ENCODE measurements at regions of chr2 and their contacts with region 1.

Region 1: GRCh38 chr2:12456293-12457151 is 260.2 kb upstream of the TRIB2 start:
- DNase-seq: peak; percentile 100
- H3K4me3 Mint-ChIP-seq: peak overlapping the region; percentile 54
- H3K27ac Mint-ChIP-seq: peak overlapping the region; percentile 80
- H3K4me1 Mint-ChIP-seq: peaks cover 19% of the 10 kb centered on the region
- H3K27me3 Mint-ChIP-seq: no peaks in the 10 kb centered on the region
- CTCF ChIP-seq: no peak

Region 2: DNA sequence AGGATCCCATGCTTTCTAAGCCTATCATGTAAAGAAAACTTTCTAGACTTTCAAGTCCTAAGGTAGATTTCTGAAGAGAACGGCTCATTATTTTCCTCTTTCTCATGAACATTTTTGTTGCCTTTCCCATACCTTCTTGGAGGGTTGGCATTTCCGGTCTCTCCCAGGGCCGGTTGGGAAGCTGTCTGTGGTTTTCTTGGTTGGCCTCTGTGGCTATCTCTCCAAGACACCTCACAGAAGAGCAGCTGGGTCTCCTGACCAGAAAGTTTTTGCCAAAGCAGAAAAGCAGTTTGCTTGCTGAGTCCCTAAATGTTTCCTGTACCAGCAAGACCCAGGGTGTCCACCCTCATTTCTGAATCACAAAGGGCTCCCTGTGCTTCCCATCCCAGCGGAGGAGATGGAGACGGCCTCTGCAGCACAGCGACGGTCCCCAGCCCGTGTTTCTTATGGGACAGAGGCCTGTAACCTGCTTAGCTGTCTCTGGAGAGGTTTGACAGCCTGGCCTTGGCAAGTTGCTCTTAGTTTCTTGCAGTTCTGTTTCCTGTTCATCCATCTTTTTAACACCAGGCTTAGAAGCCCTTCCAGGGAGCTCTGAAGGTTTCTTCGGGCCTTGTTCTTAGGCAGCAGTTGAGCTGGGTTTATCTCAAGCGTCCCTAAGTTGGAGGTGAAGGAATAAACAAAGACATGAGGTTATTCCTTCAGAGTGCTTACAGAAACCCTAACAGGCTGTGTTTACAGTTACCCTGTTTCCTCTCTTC is 882.9 kb before region 1 on chr2:
- CTCF ChIA-PET with region 1: no interaction called
- POLR2A ChIA-PET with region 1: no interaction called
- intact Hi-C with region 1: no loop called
- DNase-seq: peak; percentile 33
- H3K4me3 Mint-ChIP-seq: no peak overlapping the region
- H3K27ac Mint-ChIP-seq: no peak overlapping the region
- H3K4me1 Mint-ChIP-seq: peaks cover 7% of the 10 kb centered on the region
- H3K27me3 Mint-ChIP-seq: no peaks in the 10 kb centered on the region
- CTCF ChIP-seq: no peak

Region 3: GRCh38 chr2:11829947-11830707 is 626.4 kb before region 1 on chr2:
- CTCF ChIA-PET with region 1: interaction called, 4 read pairs
- POLR2A ChIA-PET with region 1: no interaction called
- intact Hi-C with region 1: loop called (anchors 1 kb)
- DNase-seq: peak; percentile 98
- H3K4me3 Mint-ChIP-seq: peak overlapping the region; percentile 62
- H3K27ac Mint-ChIP-seq: peak overlapping the region; percentile 46
- H3K4me1 Mint-ChIP-seq: peaks cover 11% of the 10 kb centered on the region
- H3K27me3 Mint-ChIP-seq: no peaks in the 10 kb centered on the region
- CTCF ChIP-seq: peak; percentile 58

Region 4: GRCh38 chr2:11863513-11864328 is 592.8 kb before region 1 on chr2:
- CTCF ChIA-PET with region 1: no interaction called
- POLR2A ChIA-PET with region 1: no interaction called
- intact Hi-C with region 1: loop called (anchors 1 kb)
- DNase-seq: peak; percentile 96
- H3K4me3 Mint-ChIP-seq: peak overlapping the region; percentile 9
- H3K27ac Mint-ChIP-seq: peak overlapping the region; percentile 80
- H3K4me1 Mint-ChIP-seq: peaks cover 21% of the 10 kb centered on the region
- H3K27me3 Mint-ChIP-seq: no peaks in the 10 kb centered on the region
- CTCF ChIP-seq: peak; percentile 92

Region 5: DNA sequence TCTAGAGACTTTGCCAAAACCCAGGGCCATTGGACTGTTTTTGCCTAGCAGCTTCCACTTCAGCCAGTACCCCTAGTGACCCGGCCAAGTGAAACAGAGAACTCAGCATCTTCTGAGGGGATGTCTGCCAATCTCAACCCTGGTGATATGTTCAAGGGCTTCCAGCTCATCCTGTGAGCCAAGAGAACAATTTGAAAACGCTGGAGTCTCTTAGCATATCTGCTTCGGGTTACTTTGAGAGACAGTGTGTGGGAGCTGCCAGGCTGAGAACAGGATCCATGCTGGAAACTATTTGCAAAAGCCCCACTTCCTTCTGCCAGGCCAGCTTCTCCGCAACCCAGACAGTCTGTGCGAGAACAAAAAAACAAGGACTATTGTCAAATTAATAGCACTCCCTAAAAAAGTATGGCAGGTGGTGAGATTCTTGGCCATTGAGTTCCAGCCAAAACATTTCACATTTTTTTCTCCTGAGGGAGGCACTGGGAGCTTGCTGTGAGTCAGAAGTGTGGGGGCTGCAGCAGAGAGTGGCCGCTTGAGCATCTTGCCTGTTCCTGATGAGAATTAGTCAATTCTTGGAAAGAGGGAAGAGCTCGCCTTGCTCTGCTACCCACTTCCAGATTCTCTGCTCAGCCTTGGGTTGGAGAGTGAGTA is 135.4 kb before region 1 on chr2:
- CTCF ChIA-PET with region 1: no interaction called
- POLR2A ChIA-PET with region 1: interaction called, 5 read pairs
- intact Hi-C with region 1: loop called (anchors 2 kb)
- DNase-seq: peak; percentile 90
- H3K4me3 Mint-ChIP-seq: no peak overlapping the region
- H3K27ac Mint-ChIP-seq: peak overlapping the region; percentile 71
- H3K4me1 Mint-ChIP-seq: peaks cover 51% of the 10 kb centered on the region
- H3K27me3 Mint-ChIP-seq: no peaks in the 10 kb centered on the region
- CTCF ChIP-seq: no peak

Region 6: GRCh38 chr2:12469141-12469561 is 12.6 kb after region 1 on chr2:
- CTCF ChIA-PET with region 1: no interaction called
- POLR2A ChIA-PET with region 1: no interaction called
- intact Hi-C with region 1: no loop called
- DNase-seq: no peak
- H3K4me3 Mint-ChIP-seq: no peak overlapping the region
- H3K27ac Mint-ChIP-seq: no peak overlapping the region
- H3K4me1 Mint-ChIP-seq: no peaks in the 10 kb centered on the region
- H3K27me3 Mint-ChIP-seq: no peaks in the 10 kb centered on the region
- CTCF ChIP-seq: no peak

Region 7: GRCh38 chr2:12507295-12507694 is 50.8 kb after region 1 on chr2:
- CTCF ChIA-PET with region 1: no interaction called
- POLR2A ChIA-PET with region 1: interaction called, 3 read pairs
- intact Hi-C with region 1: loop called (anchors 1 kb)
- DNase-seq: peak; percentile 99
- H3K4me3 Mint-ChIP-seq: no peak overlapping the region
- H3K27ac Mint-ChIP-seq: peak overlapping the region; percentile 22
- H3K4me1 Mint-ChIP-seq: peaks cover 38% of the 10 kb centered on the region
- H3K27me3 Mint-ChIP-seq: no peaks in the 10 kb centered on the region
- CTCF ChIP-seq: no peak

Region 8: GRCh38 chr2:12534646-12535263 is 78.2 kb after region 1 on chr2:
- CTCF ChIA-PET with region 1: no interaction called
- POLR2A ChIA-PET with region 1: interaction called, 5 read pairs
- intact Hi-C with region 1: loop called (anchors 1 kb)
- DNase-seq: peak; percentile 77
- H3K4me3 Mint-ChIP-seq: peak overlapping the region; percentile 1
- H3K27ac Mint-ChIP-seq: peak overlapping the region; percentile 75
- H3K4me1 Mint-ChIP-seq: peaks cover 22% of the 10 kb centered on the region
- H3K27me3 Mint-ChIP-seq: no peaks in the 10 kb centered on the region
- CTCF ChIP-seq: no peak

Region 9: DNA sequence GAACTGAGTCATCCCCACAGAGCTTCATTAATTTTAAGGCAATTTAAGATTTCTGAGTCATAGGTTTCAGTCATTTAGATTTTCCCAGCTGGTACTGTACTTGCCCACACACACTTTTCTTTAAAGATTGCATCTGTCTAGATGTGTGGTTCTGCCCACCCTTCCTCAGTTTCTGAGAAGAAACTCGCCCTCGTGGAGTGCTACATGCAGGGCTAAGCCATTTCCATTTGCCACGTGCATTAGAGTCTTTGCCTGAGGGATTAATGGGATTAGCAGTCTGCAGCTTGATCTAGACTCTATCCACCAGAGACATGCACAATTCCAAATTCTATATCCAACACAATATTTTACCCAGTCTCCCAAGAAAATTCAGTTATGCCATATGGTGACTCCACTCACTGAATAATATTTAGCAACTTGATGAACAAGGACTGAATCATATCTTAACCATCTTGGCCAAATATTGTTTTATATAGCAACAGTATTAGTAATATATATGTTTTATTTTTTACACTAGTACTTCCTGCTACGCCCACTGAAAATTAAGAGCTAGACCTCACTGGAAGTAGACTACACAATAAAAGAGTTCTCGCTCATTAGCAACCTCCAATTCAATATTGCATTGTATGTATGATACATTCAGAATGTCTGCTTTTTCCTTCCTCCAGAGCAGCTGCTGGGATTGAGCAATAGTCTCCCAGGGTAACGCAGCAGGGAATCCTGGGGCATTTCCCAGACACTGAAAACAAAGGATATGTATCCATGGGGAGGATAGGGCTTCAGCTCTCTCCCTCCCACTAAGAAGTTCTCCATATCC is 246.0 kb after region 1 on chr2:
- CTCF ChIA-PET with region 1: no interaction called
- POLR2A ChIA-PET with region 1: interaction called, 5 read pairs
- intact Hi-C with region 1: loop called (anchors 5 kb)
- DNase-seq: peak; percentile 91
- H3K4me3 Mint-ChIP-seq: peak overlapping the region; percentile 40
- H3K27ac Mint-ChIP-seq: peak overlapping the region; percentile 89
- H3K4me1 Mint-ChIP-seq: peaks cover 22% of the 10 kb centered on the region
- H3K27me3 Mint-ChIP-seq: no peaks in the 10 kb centered on the region
- CTCF ChIP-seq: no peak

Region 10: DNA sequence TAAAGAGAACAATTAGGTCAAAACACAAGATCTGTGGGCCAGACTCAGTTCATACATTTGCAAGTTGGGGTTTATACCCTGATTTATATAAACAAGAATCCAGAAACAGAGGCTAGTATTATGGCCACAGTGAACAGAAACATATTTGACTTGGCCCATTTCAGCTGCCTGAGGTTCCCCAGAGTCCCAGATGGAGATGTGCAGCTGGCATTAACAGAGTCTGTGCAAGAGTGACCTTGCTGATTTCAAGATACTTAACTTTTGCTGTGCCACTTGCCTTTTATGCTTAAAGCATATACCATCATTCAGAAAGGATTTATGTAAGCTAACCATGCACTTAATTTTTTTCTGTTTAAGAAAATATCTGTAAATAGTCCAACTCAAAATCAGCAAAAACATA is 896.6 kb after region 1 on chr2:
- CTCF ChIA-PET with region 1: no interaction called
- POLR2A ChIA-PET with region 1: no interaction called
- intact Hi-C with region 1: no loop called
- DNase-seq: no peak
- H3K4me3 Mint-ChIP-seq: no peak overlapping the region
- H3K27ac Mint-ChIP-seq: no peak overlapping the region
- H3K4me1 Mint-ChIP-seq: no peaks in the 10 kb centered on the region
- H3K27me3 Mint-ChIP-seq: no peaks in the 10 kb centered on the region
- CTCF ChIP-seq: no peak

Measured in MCF 10A (cell line).